ENCODE measurements at regions of chr19 and their contacts with region 1.

Region 1: DNA sequence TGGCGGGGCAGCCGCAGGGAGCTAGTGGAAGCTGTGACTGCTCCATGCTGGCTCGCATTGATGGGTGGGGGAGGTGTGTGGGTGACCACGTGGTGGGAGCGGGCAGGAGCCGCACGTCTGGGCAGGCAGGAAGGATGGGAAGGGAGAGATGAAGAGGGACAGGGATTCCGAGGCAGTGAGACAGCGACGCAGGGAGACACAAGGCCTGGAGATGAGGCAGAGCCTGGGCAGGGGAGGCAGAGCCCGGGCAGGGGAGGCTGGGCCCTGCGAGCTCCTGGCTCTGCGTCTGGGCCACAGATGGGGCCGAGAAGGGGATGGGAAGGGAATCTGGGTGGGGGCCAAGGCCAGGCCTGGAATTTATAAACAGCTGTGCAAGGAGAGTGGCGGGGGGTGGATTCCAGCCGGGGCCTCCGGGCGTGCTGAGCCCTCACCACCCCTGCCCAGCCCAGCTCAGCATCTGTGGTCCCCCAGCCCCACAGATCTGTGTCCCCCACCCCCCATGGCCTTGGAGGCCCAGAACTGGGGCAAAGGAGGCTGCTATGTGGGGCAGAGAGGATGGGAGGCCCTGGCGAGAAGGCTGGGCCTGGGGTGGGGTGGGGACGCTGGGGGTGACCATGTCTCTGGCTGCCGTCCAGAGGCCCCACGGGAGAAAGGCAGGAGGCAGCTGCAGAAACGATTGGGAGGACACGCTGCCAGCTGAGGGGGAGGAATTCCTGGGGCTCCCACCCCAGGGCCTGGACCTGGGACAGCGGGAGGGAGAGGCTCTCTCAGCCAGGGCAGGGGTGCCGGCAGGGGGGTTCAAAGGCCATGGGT is 6.0 kb downstream of the EHD2 start:
- DNase-seq: peak; percentile 99
- H3K4me3 ChIP-seq: peak overlapping the region; percentile 43
- H3K27ac ChIP-seq: peak overlapping the region; percentile 92
- H3K27me3 ChIP-seq: no peaks in the 10 kb centered on the region
- CTCF ChIP-seq: no peak

Region 2: GRCh38 chr19:47729992-47730889 is 11.0 kb after region 1 on chr19:
- CTCF ChIA-PET with region 1: interaction called, 4 read pairs
- POLR2A ChIA-PET with region 1: interaction called, 36 read pairs
- DNase-seq: no peak
- H3K4me3 ChIP-seq: no peak overlapping the region
- H3K27ac ChIP-seq: peak overlapping the region; percentile 73
- H3K27me3 ChIP-seq: no peaks in the 10 kb centered on the region
- CTCF ChIP-seq: no peak

Region 3: DNA sequence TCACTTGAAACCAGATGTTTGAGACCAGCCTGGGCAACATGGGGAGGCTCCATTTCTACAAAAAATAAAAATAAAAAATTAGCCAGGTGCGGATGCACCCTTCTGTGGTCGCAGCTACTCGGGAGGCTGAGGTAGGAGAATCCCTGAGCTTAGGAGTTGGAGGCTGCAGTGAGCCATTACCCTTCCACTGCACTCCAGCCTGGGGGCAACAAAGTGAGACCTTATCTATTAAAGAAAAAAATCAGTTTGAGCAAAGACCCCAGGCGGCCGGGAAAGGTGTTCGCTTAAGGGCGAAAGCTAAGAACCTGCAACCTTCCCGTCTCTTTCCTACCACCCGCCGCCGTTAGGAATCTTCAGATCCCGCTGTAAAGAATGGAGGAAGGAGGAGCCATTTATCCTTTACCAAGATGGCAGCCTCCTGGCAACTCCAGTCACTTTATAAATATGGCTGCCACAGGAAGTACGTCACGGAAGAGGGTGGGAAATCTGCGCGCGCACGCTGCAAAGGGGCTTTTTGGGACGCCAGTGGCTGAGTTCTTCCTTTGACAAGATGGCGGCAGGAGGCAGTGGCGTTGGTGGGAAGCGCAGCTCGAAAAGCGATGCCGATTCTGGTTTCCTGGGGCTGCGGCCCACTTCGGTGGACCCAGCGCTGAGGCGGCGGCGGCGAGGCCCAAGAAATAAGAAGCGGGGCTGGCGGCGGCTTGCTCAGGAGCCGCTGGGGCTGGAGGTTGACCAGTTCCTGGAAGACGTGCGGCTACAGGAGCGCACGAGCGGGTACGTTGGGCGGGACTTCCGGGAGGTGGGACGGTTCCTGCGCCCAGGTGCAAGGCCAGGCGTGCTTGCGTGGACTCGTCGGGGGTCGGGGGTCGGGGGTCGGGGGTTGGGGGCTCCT is 26.0 kb after region 1 on chr19 and contains the start of gene NOP53:
- CTCF ChIA-PET with region 1: interaction called, 8 read pairs
- POLR2A ChIA-PET with region 1: interaction called, 87 read pairs
- DNase-seq: peak; percentile 95
- H3K4me3 ChIP-seq: peak within 1 kb of the TSS; percentile 75
- H3K27ac ChIP-seq: peak within 1 kb of the TSS; percentile 90
- H3K27me3 ChIP-seq: no peaks in the 10 kb centered on the region
- CTCF ChIP-seq: no peak
- polyA plus RNA-seq, gene NOP53: 114 and 123 TPM in 2 replicates

Region 4: DNA sequence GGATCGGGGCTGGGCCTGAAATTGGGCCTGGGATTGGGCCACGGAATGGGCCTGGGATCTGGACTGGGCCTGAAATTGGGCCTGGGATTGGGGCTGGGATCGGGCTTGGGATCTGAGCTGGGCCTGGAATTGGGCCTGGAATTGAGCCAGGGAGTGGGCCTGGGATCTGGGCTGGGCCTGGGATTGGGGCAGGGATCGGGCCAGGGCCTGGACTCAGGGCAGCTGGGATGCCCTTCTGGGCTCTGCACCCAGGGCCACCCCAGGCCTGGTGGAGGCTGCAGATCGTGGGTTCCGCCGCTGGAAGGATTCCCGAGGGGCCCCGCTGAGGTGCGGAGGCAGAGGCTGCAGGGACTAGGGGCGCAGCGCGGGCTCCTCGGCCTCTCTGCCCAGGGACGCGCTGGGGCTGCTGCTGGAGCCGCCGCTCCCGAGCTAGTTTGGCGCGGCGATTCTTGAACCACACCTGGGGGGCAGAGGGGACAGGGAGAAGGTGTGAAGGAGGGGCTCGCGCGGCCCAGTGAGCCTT is 83.3 kb after region 1 on chr19:
- CTCF ChIA-PET with region 1: no interaction called
- POLR2A ChIA-PET with region 1: no interaction called
- DNase-seq: no peak
- H3K4me3 ChIP-seq: no peak overlapping the region
- H3K27ac ChIP-seq: no peak overlapping the region
- H3K27me3 ChIP-seq: peaks cover 9% of the 10 kb centered on the region
- CTCF ChIP-seq: no peak

Region 5: GRCh38 chr19:48061401-48062344 is 342.4 kb after region 1 on chr19:
- CTCF ChIA-PET with region 1: no interaction called
- POLR2A ChIA-PET with region 1: no interaction called
- DNase-seq: no peak
- H3K4me3 ChIP-seq: no peak overlapping the region
- H3K27ac ChIP-seq: no peak overlapping the region
- H3K27me3 ChIP-seq: peaks cover 2% of the 10 kb centered on the region
- CTCF ChIP-seq: no peak

Measured in AG04450 (cell line).